ENCODE measurements at regions of chrX and their contacts with region 1.

Region 1: GRCh38 chrX:151082076-151082948 is 94.1 kb upstream of the GPR50 start:
- DNase-seq: peak; percentile 51 to 70 (median 66)
- ATAC-seq: peak; percentile 97
- H3K4me3 ChIP-seq: no peak overlapping the region
- H3K4me1 ChIP-seq: no peaks in the 10 kb centered on the region
- CTCF ChIP-seq: peak; percentile 81

Region 2: DNA sequence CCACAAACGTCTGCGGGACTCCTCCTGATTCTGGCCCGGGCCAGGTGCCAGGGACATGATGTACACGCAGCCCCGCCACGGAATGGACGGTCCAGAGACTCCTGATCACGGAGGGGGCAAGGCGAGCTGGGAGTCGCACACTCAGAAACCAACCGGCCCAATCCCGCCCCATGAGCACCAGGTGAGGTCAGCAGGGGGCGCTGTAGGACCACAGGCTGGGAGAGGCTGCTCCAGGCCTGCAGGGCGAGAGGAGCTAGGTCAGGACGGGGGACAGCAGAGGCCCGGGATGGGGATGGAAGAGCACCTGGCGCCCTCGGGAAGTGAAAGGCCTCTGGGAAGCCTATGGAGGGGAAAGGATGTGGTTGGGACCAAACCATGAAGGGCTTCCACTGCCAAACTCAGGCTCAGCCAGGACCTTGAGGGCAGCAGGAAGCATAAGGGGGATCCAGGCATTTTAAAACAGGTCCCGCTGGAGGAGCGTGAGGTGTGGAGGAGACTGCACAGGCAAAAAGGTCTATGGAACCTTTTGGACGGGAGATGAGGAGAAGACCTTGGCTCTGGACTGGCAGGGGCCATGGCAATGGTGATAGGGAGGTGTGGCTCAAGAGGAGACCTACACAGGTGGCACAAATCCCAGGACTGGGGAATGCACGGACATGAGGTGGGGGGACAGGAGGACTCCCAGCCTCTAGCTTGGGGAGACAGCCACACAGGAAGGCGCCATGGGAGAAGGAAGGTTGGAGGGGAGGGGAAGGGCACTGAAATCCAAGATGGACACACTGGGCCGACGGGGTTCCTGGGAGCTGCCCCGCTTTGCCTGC is 310.0 kb before region 1 on chrX:
- intact Hi-C with region 1: loop called (anchors 2 kb)
- DNase-seq: peak; percentile 71 to 85 (median 82)
- ATAC-seq: peak; percentile 90
- H3K4me3 ChIP-seq: no peak overlapping the region
- H3K4me1 ChIP-seq: no peaks in the 10 kb centered on the region
- CTCF ChIP-seq: peak; percentile 42